Activated naive CD8-positive, alpha-beta T cell treated with anti-CD3 and anti-CD28 coated beads, Interleukin-2, amount 10 ng/mL, durations not matched to agents 7 days and 5 days (primary cell): ENCODE measurements at regions of chr7 and their contacts with region 1.

Region 1: DNA sequence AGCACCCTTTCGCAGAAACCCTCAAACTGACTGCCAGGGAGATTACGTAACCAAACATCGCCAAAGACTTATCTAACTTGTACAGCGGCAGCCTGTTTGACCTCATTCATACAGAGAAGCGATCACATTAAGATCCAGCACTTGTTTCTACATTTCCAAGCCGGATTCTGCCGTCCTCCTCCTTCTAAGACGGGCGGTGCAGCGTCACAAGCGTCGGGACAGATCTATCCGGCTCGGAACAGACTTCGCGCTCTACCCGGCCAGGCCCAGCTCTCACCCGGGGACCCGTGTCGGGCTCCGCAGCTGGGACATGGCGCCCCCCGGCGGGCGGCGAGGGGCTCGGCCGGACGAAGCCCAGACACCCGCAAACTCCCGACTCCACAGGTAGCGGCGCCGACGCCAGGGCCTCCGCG is 373 bp downstream of the H2AZ2 start:
- DNase-seq: peak; percentile 95
- ATAC-seq: peak; percentile 70
- H3K4me3 Mint-ChIP-seq: peak overlapping the region; percentile 87
- H3K27ac Mint-ChIP-seq: peak overlapping the region; percentile 97
- H3K4me1 Mint-ChIP-seq: peaks cover 37% of the 10 kb centered on the region
- H3K27me3 Mint-ChIP-seq: no peaks in the 10 kb centered on the region

Region 2: GRCh38 chr7:44573464-44574286 is 273.8 kb before region 1 on chr7 and contains the start of gene DDX56:
- POLR2A ChIA-PET with region 1: interaction called, 19 read pairs
- DNase-seq: peak; percentile 90
- ATAC-seq: peak; percentile 97
- H3K4me3 Mint-ChIP-seq: peak within 1 kb of the TSS; percentile 96
- H3K27ac Mint-ChIP-seq: peak within 1 kb of the TSS; percentile 95
- H3K4me1 Mint-ChIP-seq: peaks cover 23% of the 10 kb centered on the region
- H3K27me3 Mint-ChIP-seq: no peaks in the 10 kb centered on the region
- total RNA-seq, gene DDX56: 94.1 to 102 TPM

Region 3: GRCh38 chr7:44606450-44607254 is 240.9 kb before region 1 on chr7 and contains the start of gene OGDH:
- POLR2A ChIA-PET with region 1: interaction called, 34 read pairs
- DNase-seq: peak; percentile 99
- ATAC-seq: peak; percentile 98
- H3K4me3 Mint-ChIP-seq: peak within 1 kb of the TSS; percentile 99
- H3K27ac Mint-ChIP-seq: peak within 1 kb of the TSS; percentile 100
- H3K4me1 Mint-ChIP-seq: peaks cover 32% of the 10 kb centered on the region
- H3K27me3 Mint-ChIP-seq: peaks cover 11% of the 10 kb centered on the region
- total RNA-seq, gene OGDH: 99.6 to 103 TPM

Region 4: GRCh38 chr7:44858161-44858560 is 10.6 kb after region 1 on chr7:
- POLR2A ChIA-PET with region 1: interaction called, 34 read pairs
- DNase-seq: no peak
- ATAC-seq: no peak
- H3K4me3 Mint-ChIP-seq: no peak overlapping the region
- H3K27ac Mint-ChIP-seq: no peak overlapping the region
- H3K4me1 Mint-ChIP-seq: peaks cover 12% of the 10 kb centered on the region
- H3K27me3 Mint-ChIP-seq: peaks cover 13% of the 10 kb centered on the region

Region 5: DNA sequence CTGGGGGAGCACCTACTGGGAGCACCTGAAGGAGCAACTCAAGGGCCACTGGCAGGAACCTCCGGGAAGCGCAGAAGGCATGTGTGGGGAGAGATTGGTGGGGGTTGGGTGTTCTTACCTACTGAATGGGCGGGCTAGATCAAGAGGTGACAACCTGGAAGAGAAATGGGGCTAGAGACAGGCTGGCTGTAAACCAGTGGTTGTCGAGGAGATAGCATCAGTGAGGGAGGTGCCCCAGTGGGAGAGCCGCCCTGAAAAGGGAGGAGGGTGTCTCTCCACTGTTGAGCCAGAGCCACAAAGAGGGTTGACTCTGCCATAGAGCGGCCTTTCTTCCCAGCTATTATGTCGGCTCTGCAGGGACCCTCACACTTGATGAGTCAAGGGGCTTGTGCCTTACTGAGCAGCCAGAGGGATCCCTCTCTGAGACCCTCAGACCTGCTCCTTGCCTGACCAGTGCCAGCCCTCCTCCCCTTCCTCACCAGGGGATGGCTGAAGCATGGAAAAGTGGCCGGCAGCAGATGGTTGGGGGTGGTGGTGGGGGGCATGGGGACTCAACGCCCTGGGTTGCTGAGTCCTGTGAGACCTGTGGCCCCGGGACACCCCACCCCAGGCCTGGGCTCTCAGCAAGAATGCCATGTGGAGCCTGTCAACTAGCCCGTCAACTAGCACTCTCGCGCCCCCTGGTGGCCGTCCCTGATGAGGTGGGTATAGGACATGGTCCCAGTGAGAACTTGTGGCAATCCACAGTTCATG is 74.3 kb after region 1 on chr7:
- POLR2A ChIA-PET with region 1: interaction called, 28 read pairs
- DNase-seq: peak; percentile 97
- ATAC-seq: peak; percentile 99
- H3K4me3 Mint-ChIP-seq: no peak overlapping the region
- H3K27ac Mint-ChIP-seq: peak overlapping the region; percentile 72
- H3K4me1 Mint-ChIP-seq: peaks cover 24% of the 10 kb centered on the region
- H3K27me3 Mint-ChIP-seq: peaks cover 8% of the 10 kb centered on the region